ENCODE measurements at regions of chr1 and their contacts with region 1.

Region 1: DNA sequence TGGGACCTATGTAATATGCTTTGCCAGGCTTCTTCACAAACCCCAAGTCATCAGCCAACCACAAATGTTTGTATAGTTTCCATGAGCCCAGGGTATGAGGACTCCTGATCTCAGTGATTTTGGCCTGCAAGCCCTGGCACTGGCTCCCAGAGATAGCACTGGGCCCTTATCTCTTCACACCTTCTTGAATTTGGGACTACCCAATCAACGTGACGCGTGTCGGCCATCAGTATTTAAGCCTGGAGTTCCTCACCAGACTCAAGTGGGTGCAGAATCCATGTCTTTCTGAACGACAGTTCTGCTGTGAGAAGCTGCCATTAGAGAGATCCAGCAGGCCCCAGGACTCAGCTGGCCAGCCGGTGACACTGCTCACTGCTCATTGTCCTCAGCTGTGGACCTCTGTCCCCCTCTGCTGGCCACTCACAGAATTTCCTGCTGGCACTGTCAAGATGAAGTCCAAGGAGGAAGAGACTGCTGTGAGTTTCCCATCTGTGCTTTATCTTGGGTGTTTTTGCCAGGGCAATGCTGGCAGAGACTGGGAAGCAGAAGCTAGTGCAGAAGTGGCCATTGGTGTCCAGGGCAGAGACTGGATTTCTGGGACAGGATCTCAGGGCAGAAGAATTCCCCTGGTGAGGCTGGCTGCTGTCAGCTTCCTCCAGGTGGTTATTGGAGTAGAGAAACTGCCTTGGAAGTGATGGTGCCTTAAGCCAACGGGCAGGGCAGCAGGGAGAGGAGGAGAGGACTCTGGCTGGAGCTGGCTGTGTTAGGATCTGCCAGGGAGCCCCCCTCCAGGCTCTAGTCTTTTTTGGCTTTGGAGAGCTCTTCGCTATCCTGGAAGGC is 28.4 kb downstream of the TMCC2 start:
- DNase-seq: peak; percentile 71 to 87
- H3K4me3 ChIP-seq: no peak overlapping the region
- H3K27ac ChIP-seq: no peak overlapping the region
- H3K4me1 ChIP-seq: 0 out of 2 replicates have a peak, but pooled peaks cover 5% of the 10 kb centered on the region
- H3K27me3 ChIP-seq: peaks cover 2% of the 10 kb centered on the region; the same call in 1 of the 2 replicates
- CTCF ChIP-seq: peak; percentile 97

Region 2: DNA sequence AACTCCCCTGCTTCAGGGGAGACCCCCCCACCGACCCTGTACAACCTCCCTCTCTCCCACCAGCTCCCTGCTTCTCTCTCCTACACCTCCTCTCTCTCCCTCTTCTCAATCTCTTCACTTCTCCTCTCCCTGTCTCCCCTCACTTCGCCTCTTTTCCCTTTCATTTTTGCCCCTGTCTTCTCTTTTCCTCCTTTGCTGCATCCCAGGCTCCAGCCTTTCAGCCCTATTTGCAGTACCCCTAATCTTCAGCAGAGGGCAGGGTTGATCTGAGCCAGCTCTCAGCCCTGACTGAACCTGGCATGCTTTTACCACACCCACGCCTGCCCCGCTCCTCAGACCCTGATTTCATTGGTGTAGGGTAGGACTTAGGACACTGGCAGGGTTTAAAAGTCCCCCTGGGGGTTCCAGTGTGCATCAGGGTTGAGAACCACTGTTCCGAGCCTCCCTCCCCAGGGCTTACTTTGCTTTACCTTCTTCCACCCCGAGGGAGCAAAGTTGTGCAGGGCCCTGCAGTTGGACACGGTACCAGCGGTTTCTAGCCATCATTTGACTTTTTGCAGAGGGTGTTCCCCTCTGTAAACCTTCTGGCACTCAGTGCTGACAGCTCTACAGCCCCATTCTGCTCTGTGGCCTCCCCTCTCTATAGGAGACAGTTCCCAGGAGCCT is 280.5 kb before region 1 on chr1:
- CTCF ChIA-PET with region 1: interaction called, 8 read pairs
- POLR2A ChIA-PET with region 1: interaction called, 4 read pairs
- intact Hi-C with region 1: loop called (anchors 1 kb)
- DNase-seq: peak in 1 of 2 experiments; percentile 59
- H3K4me3 ChIP-seq: no peak overlapping the region
- H3K27ac ChIP-seq: no peak overlapping the region
- H3K4me1 ChIP-seq: no peaks in the 10 kb centered on the region
- H3K27me3 ChIP-seq: peaks cover 93% of the 10 kb centered on the region
- CTCF ChIP-seq: peak; percentile 91

Region 3: GRCh38 chr1:204989266-204990058 is 266.7 kb before region 1 on chr1:
- CTCF ChIA-PET with region 1: no interaction called
- POLR2A ChIA-PET with region 1: no interaction called
- intact Hi-C with region 1: loop called (anchors 1 kb)
- DNase-seq: peak in 1 of 2 experiments; percentile 68
- H3K4me3 ChIP-seq: no peak overlapping the region
- H3K27ac ChIP-seq: no peak overlapping the region
- H3K4me1 ChIP-seq: no peaks in the 10 kb centered on the region
- H3K27me3 ChIP-seq: peaks cover 99% of the 10 kb centered on the region
- CTCF ChIP-seq: peak; percentile 93

Region 4: GRCh38 chr1:205061665-205062069 is 194.5 kb before region 1 on chr1:
- CTCF ChIA-PET with region 1: interaction called, 10 read pairs
- POLR2A ChIA-PET with region 1: no interaction called
- intact Hi-C with region 1: loop called (anchors 1 kb)
- DNase-seq: peak; percentile 37 to 77
- H3K4me3 ChIP-seq: no peak overlapping the region
- H3K27ac ChIP-seq: no peak overlapping the region
- H3K4me1 ChIP-seq: no peaks in the 10 kb centered on the region
- H3K27me3 ChIP-seq: peaks cover 84% of the 10 kb centered on the region
- CTCF ChIP-seq: peak; percentile 91

Region 5: GRCh38 chr1:205121660-205122488 is 134.3 kb before region 1 on chr1 and contains the start of gene RBBP5:
- CTCF ChIA-PET with region 1: no interaction called
- POLR2A ChIA-PET with region 1: interaction called, 4 read pairs
- intact Hi-C with region 1: loop called (anchors 1 kb)
- DNase-seq: peak; percentile 94 to 95
- H3K4me3 ChIP-seq: peak within 1 kb of the TSS; percentile 84
- H3K27ac ChIP-seq: peak within 1 kb of the TSS; percentile 79
- H3K4me1 ChIP-seq: peaks cover 13% of the 10 kb centered on the region
- H3K27me3 ChIP-seq: no peaks in the 10 kb centered on the region
- CTCF ChIP-seq: peak; percentile 63
- total RNA-seq, gene RBBP5: 17.7 and 17.9 TPM in 2 replicates

Region 6: DNA sequence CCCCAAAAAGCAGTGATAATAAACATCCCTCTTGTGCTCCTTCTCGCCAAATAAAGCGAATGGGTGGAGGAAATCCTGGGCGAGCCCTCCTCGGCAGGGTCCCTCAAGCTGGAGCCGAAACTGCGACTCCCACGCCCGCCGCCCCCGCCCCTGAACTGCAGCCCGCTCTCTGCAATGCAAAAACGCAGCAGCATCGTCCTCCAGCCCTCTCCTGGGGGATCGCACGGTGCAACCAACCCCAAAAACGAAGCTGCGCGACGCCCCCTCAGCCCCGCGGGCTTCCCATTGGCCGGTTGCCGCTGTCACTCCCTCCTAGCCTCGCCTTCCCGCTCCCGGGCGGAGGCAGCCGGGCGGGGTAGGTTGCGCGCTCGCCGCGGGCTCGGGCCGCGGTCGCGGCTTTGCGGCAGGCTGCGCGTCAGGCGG is 28.6 kb before region 1 on chr1 and contains the start of gene TMCC2:
- CTCF ChIA-PET with region 1: interaction called, 28 read pairs
- POLR2A ChIA-PET with region 1: no interaction called
- intact Hi-C with region 1: loop called (anchors 2 kb)
- DNase-seq: peak; percentile 52 to 82
- H3K4me3 ChIP-seq: peak within 1 kb of the TSS; percentile 58
- H3K27ac ChIP-seq: no peak within 1 kb of the TSS
- H3K4me1 ChIP-seq: 0 out of 2 replicates have a peak, but pooled peaks cover 8% of the 10 kb centered on the region
- H3K27me3 ChIP-seq: peaks cover 12% of the 10 kb centered on the region; the same call in 1 of the 2 replicates
- CTCF ChIP-seq: no peak
- total RNA-seq, gene TMCC2: 0.79 and 0.80 TPM in 2 replicates

Region 7: DNA sequence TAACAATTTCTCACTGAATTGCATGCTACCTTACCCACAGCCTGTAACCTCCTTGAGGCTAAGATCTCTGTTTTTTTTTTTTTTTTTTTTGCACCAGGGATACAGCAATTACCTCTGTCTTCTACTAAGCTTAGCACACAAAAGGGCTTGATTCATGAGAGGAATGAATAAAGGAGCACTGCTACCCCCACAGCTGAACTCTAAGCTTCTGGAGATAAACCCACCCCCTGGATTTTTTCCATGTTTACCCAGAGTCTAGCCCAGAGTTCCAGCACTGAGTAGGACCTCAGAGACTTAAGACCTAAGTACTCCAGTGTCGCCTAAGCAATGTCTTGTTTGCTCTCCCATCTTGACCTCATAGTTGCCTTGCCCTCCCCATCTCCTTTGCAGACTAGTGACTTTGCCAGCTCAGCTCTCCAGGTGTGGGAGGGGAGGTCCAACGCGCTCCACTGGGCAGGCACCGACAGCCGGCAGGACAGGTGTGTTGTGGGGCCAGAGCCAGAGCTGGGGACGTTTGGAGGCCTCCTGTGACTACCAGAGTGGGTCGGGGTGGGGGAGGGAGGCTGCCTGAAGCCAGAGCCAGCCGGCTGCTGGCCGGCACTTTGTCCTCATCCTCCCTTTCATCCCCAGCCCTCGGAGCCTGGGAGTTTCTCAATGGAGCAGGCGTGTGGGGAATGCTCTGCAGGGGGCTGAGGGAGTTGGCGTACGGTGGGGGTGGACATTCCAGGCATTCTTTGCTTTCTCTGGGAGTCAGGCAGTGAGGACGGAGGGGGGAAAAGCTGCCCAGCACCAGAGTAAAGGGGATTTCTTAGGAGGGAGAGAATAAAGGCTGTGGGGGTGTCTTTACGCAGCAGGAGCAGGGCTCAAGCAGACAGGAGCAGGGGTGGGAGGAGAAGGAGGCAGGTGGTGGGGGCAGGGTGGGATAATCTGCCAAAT is 45.0 kb after region 1 on chr1:
- CTCF ChIA-PET with region 1: no interaction called
- POLR2A ChIA-PET with region 1: interaction called, 13 read pairs
- intact Hi-C with region 1: no loop called
- DNase-seq: peak; percentile 78 to 85
- H3K4me3 ChIP-seq: peak overlapping the region; percentile 15; the same call in 1 of the 2 replicates
- H3K27ac ChIP-seq: peak overlapping the region; percentile 68
- H3K4me1 ChIP-seq: peaks cover 53% of the 10 kb centered on the region
- H3K27me3 ChIP-seq: no peaks in the 10 kb centered on the region
- CTCF ChIP-seq: no peak

Measured in PC-9 (cell line).